ENCODE measurements at regions of chr4 and their contacts with region 1.

Region 1: GRCh38 chr4:54217642-54218495 is 11.2 kb upstream of the PDGFRA start:
- DNase-seq: peak; percentile 78 to 88 (median 83)
- H3K4me3 ChIP-seq: peak overlapping the region; percentile 24
- H3K27ac ChIP-seq: no peak overlapping the region
- H3K4me1 ChIP-seq: peaks cover 5% of the 10 kb centered on the region
- H3K27me3 ChIP-seq: no peaks in the 10 kb centered on the region
- CTCF ChIP-seq: peak; percentile 91 to 95 (median 94)
- EP300 ChIP-seq: no peak
- POLR2A ChIP-seq: no peak

Region 2: GRCh38 chr4:53702334-53703266 is 515.3 kb before region 1 on chr4:
- intact Hi-C with region 1: loop called in 2 of 4 experiments (anchors 5 to 10 kb)
- DNase-seq: peak; percentile 81 to 90 (median 87)
- H3K4me3 ChIP-seq: no peak overlapping the region
- H3K27ac ChIP-seq: peak overlapping the region in 1 of 2 donors; percentile 52
- H3K4me1 ChIP-seq: peaks cover 8% of the 10 kb centered on the region
- H3K27me3 ChIP-seq: no peaks in the 10 kb centered on the region
- CTCF ChIP-seq: no peak
- EP300 ChIP-seq: no peak
- POLR2A ChIP-seq: no peak

Region 3: GRCh38 chr4:53914313-53915016 is 303.4 kb before region 1 on chr4:
- intact Hi-C with region 1: loop called in 2 of 4 experiments (anchors 5 to 10 kb)
- DNase-seq: no peak
- H3K4me3 ChIP-seq: no peak overlapping the region
- H3K27ac ChIP-seq: no peak overlapping the region
- H3K4me1 ChIP-seq: no peaks in the 10 kb centered on the region
- H3K27me3 ChIP-seq: no peaks in the 10 kb centered on the region
- CTCF ChIP-seq: no peak
- EP300 ChIP-seq: no peak
- POLR2A ChIP-seq: no peak

Region 4: DNA sequence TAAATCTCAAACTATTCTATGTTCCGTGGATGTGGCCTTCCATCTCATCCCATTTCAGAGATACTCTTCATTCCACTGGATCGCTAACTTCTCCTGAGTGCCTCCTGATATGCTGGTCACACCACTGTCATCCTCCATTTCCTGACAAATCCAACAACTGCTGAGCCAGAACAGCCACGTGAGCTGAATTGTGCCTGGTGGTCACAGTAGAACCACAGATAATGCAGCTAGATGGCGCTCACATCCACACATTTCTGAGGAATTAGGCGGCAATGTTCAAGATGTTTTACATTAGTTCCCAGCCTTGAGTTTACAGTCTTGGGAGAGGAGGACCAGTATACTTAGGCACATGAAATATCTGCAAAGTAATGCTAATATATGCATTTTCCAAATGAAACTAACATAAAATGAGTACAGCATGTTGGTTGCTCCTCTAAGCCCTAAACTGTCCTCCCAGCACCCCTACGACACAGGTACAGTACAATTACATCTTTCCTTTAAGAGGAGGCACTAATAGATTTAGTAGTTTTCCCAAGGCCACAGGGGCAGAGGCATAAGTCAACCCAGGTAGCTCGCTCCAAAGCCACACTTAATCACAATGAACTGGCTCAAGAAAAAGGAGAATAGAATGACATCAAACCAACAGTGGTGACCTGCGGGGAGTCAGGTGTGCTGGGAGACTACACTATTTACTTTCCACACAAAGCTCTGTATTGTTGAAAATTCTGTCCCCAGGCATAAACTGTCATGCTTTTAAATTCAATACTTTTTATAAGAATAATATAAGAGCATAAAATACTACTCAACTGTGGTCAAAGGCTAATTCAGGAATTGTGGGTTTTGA is 287.7 kb before region 1 on chr4:
- intact Hi-C with region 1: loop called in 3 of 4 experiments (anchors 5 kb)
- DNase-seq: peak; percentile 65 to 87 (median 76)
- H3K4me3 ChIP-seq: no peak overlapping the region
- H3K27ac ChIP-seq: no peak overlapping the region
- H3K4me1 ChIP-seq: no peaks in the 10 kb centered on the region
- H3K27me3 ChIP-seq: no peaks in the 10 kb centered on the region
- CTCF ChIP-seq: peak; percentile 60 to 83 (median 76)
- EP300 ChIP-seq: no peak
- POLR2A ChIP-seq: no peak

Region 5: GRCh38 chr4:54064295-54065111 is 153.4 kb before region 1 on chr4 and contains the start of gene CHIC2:
- intact Hi-C with region 1: loop called in 2 of 4 experiments (anchors 10 kb)
- DNase-seq: peak; percentile 95 to 97 (median 96)
- H3K4me3 ChIP-seq: peak within 1 kb of the TSS; percentile 96
- H3K27ac ChIP-seq: peak within 1 kb of the TSS; percentile 67 to 83
- H3K4me1 ChIP-seq: peaks cover 2% of the 10 kb centered on the region
- H3K27me3 ChIP-seq: no peaks in the 10 kb centered on the region
- CTCF ChIP-seq: peak in 1 of 3 donors; percentile 9
- EP300 ChIP-seq: peak; percentile 43
- POLR2A ChIP-seq: peak; percentile 95
- total RNA-seq, gene CHIC2: 15.9 to 37.6 (median 18.3) TPM

Measured in ovary (tissue), 10 donors.